CD8-positive, alpha-beta T cell (primary cell): ENCODE measurements at regions of chr13 and their contacts with region 1.

Region 1: DNA sequence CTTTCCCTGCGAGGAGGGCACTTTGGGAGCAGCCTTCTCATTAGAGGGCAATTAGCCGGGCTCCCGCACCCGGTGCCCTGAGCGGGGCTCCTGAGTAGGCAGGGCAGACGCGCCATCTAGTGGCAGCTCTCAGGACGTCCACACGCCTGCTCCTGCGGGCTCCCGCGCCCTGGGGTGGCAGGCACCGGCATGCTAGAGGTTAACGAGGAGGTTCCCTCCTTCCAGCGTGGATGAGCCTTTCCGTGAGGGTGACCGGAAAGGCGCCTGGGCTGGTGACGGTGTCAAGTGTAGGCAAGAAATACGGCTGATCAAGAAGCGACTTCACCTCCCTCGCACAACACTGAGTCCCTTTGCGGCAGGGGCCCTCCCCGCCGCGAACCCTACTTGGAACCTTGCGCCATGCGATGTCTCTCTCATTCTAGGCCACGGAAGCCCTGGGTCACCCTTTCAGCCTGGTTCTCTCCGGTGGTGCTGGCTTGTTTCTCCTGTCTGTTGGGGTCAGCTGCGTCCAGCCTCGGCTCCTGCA is 67.7 kb downstream of the ALOX5AP start:
- DNase-seq: peak; percentile 61 to 89 (median 80)
- ATAC-seq: peak; percentile 99
- H3K4me3 ChIP-seq: no peak overlapping the region
- H3K4me3 Mint-ChIP-seq: peak overlapping the region; percentile 49
- H3K27ac ChIP-seq: no peak overlapping the region
- H3K27ac Mint-ChIP-seq: no peak overlapping the region
- H3K4me1 ChIP-seq: no peaks in the 10 kb centered on the region
- H3K4me1 Mint-ChIP-seq: peaks cover 11% of the 10 kb centered on the region
- H3K27me3 ChIP-seq: no peaks in the 10 kb centered on the region
- H3K27me3 Mint-ChIP-seq: no peaks in the 10 kb centered on the region
- CTCF ChIP-seq: peak; percentile 95

Region 2: DNA sequence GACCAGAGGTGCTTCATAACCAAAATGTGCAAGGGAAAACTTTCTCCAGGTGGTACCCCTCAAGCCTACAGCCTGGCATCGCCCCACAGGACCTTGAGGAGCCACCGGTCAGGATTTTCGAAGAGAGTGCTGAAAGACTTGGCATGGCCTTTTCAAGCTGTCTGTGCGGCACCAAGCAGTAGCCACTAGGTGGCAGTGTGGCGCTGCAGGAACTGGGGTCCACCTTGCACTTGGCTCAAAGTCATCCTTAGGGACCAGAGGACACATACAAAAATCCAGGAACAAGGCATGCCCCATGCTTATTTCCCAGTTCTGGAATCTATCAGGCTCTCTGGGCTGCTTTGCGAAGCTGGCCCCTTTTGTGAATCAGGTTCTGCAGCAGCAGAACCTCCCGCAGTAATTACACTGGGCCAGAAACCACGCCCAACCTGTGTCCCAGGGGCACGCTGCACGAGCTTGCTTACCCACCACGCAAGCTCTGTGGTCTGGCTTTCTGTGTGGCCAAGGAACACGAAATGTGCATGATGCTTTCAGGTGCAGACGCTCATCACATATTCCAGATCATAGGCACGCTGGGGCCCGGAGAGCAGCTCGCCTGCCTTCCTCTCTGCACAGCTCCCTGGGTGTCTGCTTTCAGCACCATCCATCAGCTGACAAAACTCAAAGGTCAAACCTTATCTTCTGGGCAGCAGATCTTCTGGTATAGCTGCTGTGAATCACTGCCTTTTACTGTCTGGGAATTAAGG is 1294.7 kb before region 1 on chr13:
- CTCF ChIA-PET with region 1: no interaction called
- POLR2A ChIA-PET with region 1: no interaction called
- intact Hi-C with region 1: loop called in 1 of 2 experiments (anchors 5 kb)
- DNase-seq: peak; percentile 54 to 87 (median 77)
- ATAC-seq: peak; percentile 65
- H3K4me3 ChIP-seq: no peak overlapping the region
- H3K4me3 Mint-ChIP-seq: no peak overlapping the region
- H3K27ac ChIP-seq: no peak overlapping the region
- H3K27ac Mint-ChIP-seq: no peak overlapping the region
- H3K4me1 ChIP-seq: no peaks in the 10 kb centered on the region
- H3K4me1 Mint-ChIP-seq: no peaks in the 10 kb centered on the region
- H3K27me3 ChIP-seq: no peaks in the 10 kb centered on the region
- H3K27me3 Mint-ChIP-seq: peaks cover 6% of the 10 kb centered on the region
- CTCF ChIP-seq: peak; percentile 83

Region 3: DNA sequence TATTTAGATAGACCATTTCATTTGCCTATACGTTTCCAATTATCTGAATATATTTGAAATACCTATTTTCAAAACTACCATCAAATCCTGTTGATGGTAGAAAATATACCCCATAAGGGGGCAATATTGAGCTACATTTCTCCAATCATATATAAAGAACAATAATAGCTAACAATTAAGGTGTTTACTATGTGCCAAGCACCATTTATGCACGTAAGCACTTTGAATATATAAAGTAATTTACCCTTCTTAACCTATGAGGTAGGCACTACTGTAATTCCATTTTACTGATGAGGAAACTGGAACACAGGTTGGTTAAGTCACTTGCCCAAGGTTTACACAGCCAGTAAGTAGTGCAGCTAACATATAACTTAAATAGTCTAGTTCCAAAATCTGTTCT is 1031.8 kb before region 1 on chr13:
- CTCF ChIA-PET with region 1: no interaction called
- POLR2A ChIA-PET with region 1: no interaction called
- intact Hi-C with region 1: loop called (anchors 10 kb)
- DNase-seq: peak in 2 of 9 experiments; percentile 55 to 68
- ATAC-seq: peak; percentile 65
- H3K4me3 ChIP-seq: no peak overlapping the region
- H3K4me3 Mint-ChIP-seq: no peak overlapping the region
- H3K27ac ChIP-seq: no peak overlapping the region
- H3K27ac Mint-ChIP-seq: no peak overlapping the region
- H3K4me1 ChIP-seq: no peaks in the 10 kb centered on the region
- H3K4me1 Mint-ChIP-seq: no peaks in the 10 kb centered on the region
- H3K27me3 ChIP-seq: no peaks in the 10 kb centered on the region
- H3K27me3 Mint-ChIP-seq: no peaks in the 10 kb centered on the region
- CTCF ChIP-seq: peak; percentile 77

Region 4: DNA sequence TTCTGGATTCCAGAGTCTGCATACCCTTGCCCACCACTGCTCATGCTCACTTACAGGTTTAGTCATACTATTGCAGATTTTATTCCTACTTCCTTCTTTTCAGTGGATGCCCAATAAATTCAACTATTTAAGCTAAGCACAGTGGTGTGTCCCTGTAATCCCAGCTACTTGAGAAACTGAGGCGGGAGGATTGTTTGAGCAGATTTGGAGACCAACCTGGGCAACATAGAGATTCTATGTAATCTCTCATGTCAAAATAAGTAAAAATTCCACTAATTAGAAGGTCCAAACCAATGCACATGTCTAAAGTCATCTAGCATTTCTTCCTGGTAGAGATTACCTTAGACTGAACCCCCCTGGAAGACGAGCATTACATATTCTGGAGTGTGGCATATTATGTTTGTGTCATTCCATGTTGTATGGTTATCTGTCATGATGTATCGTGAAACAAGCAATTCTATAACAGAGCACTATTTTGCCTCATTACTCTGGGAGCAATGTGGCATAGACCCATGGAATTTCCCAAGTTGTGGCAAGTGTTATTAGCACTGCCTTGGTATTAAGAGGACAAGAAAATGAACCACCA is 345.6 kb before region 1 on chr13:
- CTCF ChIA-PET with region 1: no interaction called
- POLR2A ChIA-PET with region 1: no interaction called
- intact Hi-C with region 1: no loop called
- DNase-seq: no peak
- ATAC-seq: no peak
- H3K4me3 ChIP-seq: no peak overlapping the region
- H3K4me3 Mint-ChIP-seq: no peak overlapping the region
- H3K27ac ChIP-seq: no peak overlapping the region
- H3K27ac Mint-ChIP-seq: peak overlapping the region; percentile 33
- H3K4me1 ChIP-seq: peaks cover 12% of the 10 kb centered on the region
- H3K4me1 Mint-ChIP-seq: peaks cover 34% of the 10 kb centered on the region
- H3K27me3 ChIP-seq: no peaks in the 10 kb centered on the region
- H3K27me3 Mint-ChIP-seq: no peaks in the 10 kb centered on the region
- CTCF ChIP-seq: no peak

Region 5: DNA sequence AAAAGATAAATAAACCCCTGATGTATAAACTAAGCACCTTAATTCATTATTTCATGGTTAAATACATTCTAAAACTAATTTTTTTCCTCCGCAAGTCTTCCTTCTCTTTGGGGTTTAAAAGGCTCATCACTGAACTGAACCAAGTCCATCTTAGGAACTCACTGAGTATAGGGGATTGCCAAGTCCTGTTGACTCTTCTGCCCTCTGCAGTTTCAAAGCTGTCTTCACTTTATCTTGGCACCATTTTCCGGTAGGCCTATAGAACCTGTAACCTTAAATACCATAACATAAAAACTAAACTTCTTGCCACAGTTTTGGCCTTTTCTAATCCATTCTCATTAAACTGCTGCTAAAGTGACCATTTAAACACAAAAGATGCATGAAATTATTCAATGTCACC is 251.8 kb before region 1 on chr13:
- CTCF ChIA-PET with region 1: no interaction called
- POLR2A ChIA-PET with region 1: no interaction called
- intact Hi-C with region 1: loop called in 1 of 2 experiments (anchors 2 kb)
- DNase-seq: peak in 3 of 9 experiments; percentile 11 to 67 (median 52)
- ATAC-seq: peak; percentile 83
- H3K4me3 ChIP-seq: no peak overlapping the region
- H3K4me3 Mint-ChIP-seq: no peak overlapping the region
- H3K27ac ChIP-seq: no peak overlapping the region
- H3K27ac Mint-ChIP-seq: no peak overlapping the region
- H3K4me1 ChIP-seq: no peaks in the 10 kb centered on the region
- H3K4me1 Mint-ChIP-seq: peaks cover 5% of the 10 kb centered on the region
- H3K27me3 ChIP-seq: no peaks in the 10 kb centered on the region
- H3K27me3 Mint-ChIP-seq: no peaks in the 10 kb centered on the region
- CTCF ChIP-seq: peak; percentile 33

Region 6: GRCh38 chr13:30673669-30674521 is 129.1 kb before region 1 on chr13:
- CTCF ChIA-PET with region 1: interaction called, 4 read pairs
- POLR2A ChIA-PET with region 1: interaction called, 3 read pairs
- intact Hi-C with region 1: loop called (anchors 1 kb)
- DNase-seq: peak; percentile 82 to 95 (median 87)
- ATAC-seq: peak; percentile 91
- H3K4me3 ChIP-seq: peak overlapping the region; percentile 63
- H3K4me3 Mint-ChIP-seq: peak overlapping the region; percentile 88
- H3K27ac ChIP-seq: peak overlapping the region; percentile 44 to 68
- H3K27ac Mint-ChIP-seq: peak overlapping the region; percentile 92
- H3K4me1 ChIP-seq: peaks cover 7% of the 10 kb centered on the region
- H3K4me1 Mint-ChIP-seq: peaks cover 25% of the 10 kb centered on the region
- H3K27me3 ChIP-seq: no peaks in the 10 kb centered on the region
- H3K27me3 Mint-ChIP-seq: no peaks in the 10 kb centered on the region
- CTCF ChIP-seq: no peak

Region 7: GRCh38 chr13:30739761-30740642 is 63.0 kb before region 1 on chr13:
- CTCF ChIA-PET with region 1: interaction called, 3 read pairs
- POLR2A ChIA-PET with region 1: no interaction called
- intact Hi-C with region 1: loop called in 1 of 2 experiments (anchors 2 kb)
- DNase-seq: peak in 8 of 9 experiments; percentile 34 to 87 (median 62)
- ATAC-seq: peak; percentile 54
- H3K4me3 ChIP-seq: peak overlapping the region; percentile 25 to 33
- H3K4me3 Mint-ChIP-seq: peak overlapping the region; percentile 73
- H3K27ac ChIP-seq: peak overlapping the region; percentile 28 to 68
- H3K27ac Mint-ChIP-seq: peak overlapping the region; percentile 82
- H3K4me1 ChIP-seq: peaks cover 73% of the 10 kb centered on the region
- H3K4me1 Mint-ChIP-seq: peaks cover 83% of the 10 kb centered on the region
- H3K27me3 ChIP-seq: no peaks in the 10 kb centered on the region
- H3K27me3 Mint-ChIP-seq: no peaks in the 10 kb centered on the region
- CTCF ChIP-seq: no peak